Common myeloid progenitor, CD34-positive (primary cell): ENCODE measurements at regions of chr7 and their contacts with region 1.

Region 1: DNA sequence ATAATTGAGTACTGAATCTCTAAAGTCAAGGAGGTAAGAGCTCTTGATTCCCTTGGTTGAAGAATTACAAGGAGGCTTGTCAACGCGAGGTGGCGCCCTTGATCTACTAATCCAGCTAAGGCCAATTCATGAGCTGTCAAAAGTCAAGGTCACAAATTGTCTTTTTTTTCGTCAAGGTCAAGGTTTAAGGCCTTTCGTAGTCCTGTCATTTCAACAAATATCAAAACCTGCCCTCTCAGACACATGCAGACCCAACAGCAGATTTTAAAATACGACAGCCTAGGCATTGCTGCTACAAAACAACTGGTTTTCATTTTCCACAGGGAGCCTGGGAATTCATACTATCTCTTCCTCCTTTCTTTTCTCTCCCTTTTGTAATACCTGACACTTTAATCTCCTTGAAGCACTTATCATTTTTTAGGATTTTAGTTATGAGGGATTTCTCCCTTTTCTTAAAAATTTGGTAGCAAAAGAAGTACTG is 3.6 kb downstream of the HOXA13 start:
- DNase-seq: peak; percentile 83 to 90 (median 89)
- H3K4me3 ChIP-seq: no peak overlapping the region
- H3K27ac ChIP-seq: no peak overlapping the region
- H3K4me1 ChIP-seq: peaks cover 0 to 47% (median 36%) of the 10 kb centered on the region in 4 experiments
- H3K27me3 ChIP-seq: peaks cover 42 to 99% (median 72%) of the 10 kb centered on the region in 5 experiments

Region 2: DNA sequence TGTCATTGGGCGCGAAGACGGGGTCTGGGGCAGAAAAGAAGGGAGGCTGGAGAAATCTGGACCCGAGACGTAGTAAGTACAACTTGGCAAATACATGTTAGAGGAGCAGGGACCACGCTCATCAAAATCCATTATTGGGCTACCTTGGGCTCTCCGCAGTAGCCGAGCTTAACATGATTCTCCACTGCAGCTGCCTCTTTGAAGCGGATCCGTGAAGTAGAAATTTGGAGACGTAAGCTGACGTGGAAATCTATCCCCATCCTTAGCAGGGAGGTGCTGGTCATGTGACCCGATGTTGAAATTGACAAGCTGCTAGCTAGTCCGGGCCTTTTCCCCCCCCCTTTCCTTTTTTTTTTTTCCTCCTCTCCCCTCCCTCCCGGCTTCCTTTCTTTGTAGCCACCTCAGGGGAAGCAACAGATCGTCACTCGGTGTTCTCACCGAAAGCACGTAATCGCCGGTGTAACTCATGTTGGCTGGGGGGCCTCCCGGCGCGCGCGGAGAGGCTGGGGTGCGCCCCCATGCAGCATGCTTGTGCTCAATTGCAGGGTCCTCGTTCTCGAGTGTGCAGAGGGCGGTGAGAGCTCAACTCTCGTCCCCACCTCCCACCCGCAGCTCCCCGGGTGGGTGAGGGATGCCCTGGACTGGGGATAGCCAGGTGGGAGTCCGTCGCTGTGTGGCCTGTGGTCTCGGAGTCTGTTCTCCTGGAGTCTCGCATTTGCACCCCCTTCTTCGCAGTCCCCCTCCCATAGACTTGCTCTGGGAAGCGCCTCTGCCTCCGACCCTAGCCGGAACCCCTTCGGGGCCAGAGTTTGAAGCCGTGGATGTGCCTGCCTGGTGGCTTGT is 11.1 kb before region 1 on chr7 and contains the start of gene HOXA11:
- CTCF ChIA-PET with region 1: interaction called, 13 read pairs
- POLR2A ChIA-PET with region 1: no interaction called
- DNase-seq: peak in 2 of 3 donors; percentile 59 to 64
- H3K4me3 ChIP-seq: peak within 1 kb of the TSS; percentile 8 to 75 (median 57)
- H3K27ac ChIP-seq: no peak within 1 kb of the TSS
- H3K4me1 ChIP-seq: peaks cover 0 to 62% (median 53%) of the 10 kb centered on the region in 4 experiments
- H3K27me3 ChIP-seq: peaks cover 19 to 98% (median 66%) of the 10 kb centered on the region in 5 experiments

Region 3: GRCh38 chr7:27210441-27211083 is 14.2 kb after region 1 on chr7:
- CTCF ChIA-PET with region 1: interaction called, 10 read pairs
- POLR2A ChIA-PET with region 1: interaction called, 3 read pairs
- DNase-seq: peak in 2 of 3 donors; percentile 64 to 67
- H3K4me3 ChIP-seq: peak overlapping the region in 3 of 7 experiments; percentile 27 to 44 (median 44)
- H3K27ac ChIP-seq: no peak overlapping the region
- H3K4me1 ChIP-seq: peaks cover 0 to 15% (median 12%) of the 10 kb centered on the region in 4 experiments
- H3K27me3 ChIP-seq: peaks cover 26 to 100% (median 73%) of the 10 kb centered on the region in 5 experiments

Region 4: GRCh38 chr7:27921081-27921836 is 724.9 kb after region 1 on chr7:
- CTCF ChIA-PET with region 1: interaction called, 38 read pairs
- POLR2A ChIA-PET with region 1: no interaction called
- DNase-seq: peak; percentile 87 to 92 (median 87)
- H3K4me3 ChIP-seq: peak overlapping the region in 1 of 7 experiments; percentile 30
- H3K27ac ChIP-seq: no peak overlapping the region
- H3K4me1 ChIP-seq: peaks cover 4 to 8% (median 6%) of the 10 kb centered on the region in 4 experiments
- H3K27me3 ChIP-seq: peaks cover 0 to 2% (median 0%) of the 10 kb centered on the region in 5 experiments

Region 5: GRCh38 chr7:28020302-28020940 is 824.1 kb after region 1 on chr7:
- CTCF ChIA-PET with region 1: interaction called, 19 read pairs
- POLR2A ChIA-PET with region 1: no interaction called
- DNase-seq: peak; percentile 66 to 79 (median 75)
- H3K4me3 ChIP-seq: no peak overlapping the region
- H3K27ac ChIP-seq: no peak overlapping the region
- H3K4me1 ChIP-seq: peaks cover 0 to 3% (median 0%) of the 10 kb centered on the region in 4 experiments
- H3K27me3 ChIP-seq: peaks cover 0 to 13% (median 0%) of the 10 kb centered on the region in 5 experiments